ENCODE measurements at regions of chr20 and their contacts with region 1.

Region 1: DNA sequence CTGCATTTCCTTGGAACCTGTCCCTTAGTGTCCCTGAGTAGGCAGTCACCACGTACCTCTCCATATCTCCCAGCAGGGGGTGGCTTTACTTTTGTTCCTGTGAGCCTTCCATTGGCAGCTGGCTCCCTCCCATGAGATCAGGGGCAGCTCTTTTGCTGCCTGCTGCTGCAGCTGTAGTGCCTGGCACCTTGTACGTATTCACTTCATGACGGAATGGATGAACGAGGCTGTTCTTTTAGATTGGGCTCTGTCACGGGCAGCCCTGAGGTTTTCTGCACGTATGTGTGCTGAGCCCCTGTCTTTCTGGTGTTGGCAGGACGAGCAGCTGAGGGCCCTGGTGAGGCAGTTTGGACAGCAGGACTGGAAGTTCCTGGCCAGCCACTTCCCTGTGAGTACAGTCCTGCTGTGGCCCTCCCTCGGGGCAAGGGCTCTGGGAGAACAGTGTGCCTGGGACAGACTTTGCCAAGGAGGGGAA is 14.6 kb downstream of the MYBL2 start:
- DNase-seq: peak; percentile 82
- H3K4me3 ChIP-seq: peak overlapping the region; percentile 59
- H3K27ac ChIP-seq: peak overlapping the region; percentile 97
- H3K4me1 ChIP-seq: peaks cover 76% of the 10 kb centered on the region
- CTCF ChIP-seq: peak; percentile 61

Region 2: DNA sequence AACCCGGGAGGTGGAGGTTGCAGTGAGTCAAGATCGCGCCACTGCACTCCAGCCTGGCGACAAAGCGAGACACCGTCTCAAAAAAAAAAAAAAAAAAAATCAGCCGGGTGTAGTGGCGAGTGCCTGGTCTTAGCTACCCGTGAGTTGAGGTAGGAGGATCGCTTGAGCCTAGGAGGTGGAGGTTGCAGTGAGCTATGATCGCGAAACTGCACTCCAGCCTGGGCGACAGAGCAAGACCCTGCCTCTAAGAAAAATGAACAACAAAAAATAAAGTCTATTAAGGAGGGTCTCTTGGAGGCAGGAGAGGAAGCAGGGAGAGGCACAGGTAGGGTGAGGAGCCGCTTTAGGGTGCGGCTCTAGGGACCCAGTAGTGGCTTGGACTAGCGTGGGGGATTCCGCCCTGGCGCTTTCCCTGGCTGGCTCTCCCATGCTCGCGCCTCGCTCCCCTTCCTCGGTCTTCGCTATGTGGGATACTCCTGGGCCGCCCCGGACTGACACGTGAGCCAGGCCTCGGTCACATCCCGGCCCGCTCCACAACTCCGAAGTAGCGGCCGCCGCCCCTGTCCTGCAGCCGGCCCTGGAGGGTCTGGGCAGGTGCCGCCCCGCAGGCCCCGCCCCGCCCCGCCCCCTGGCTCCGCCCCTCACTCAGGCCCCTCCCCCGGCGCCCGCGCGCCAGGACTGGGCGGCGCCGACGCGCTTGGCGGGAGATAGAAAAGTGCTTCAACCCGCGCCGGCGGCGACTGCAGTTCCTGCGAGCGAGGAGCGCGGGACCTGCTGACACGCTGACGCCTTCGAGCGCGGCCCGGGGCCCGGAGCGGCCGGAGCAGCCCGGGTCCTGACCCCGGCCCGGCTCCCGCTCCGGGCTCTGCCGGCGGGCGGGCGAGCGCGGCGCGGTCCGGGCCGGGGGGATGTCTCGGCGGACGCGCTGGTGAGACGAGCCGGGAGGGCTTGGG is 14.9 kb before region 1 on chr20 and contains the start of gene MYBL2:
- CTCF ChIA-PET with region 1: no interaction called
- POLR2A ChIA-PET with region 1: interaction called, 9 read pairs
- intact Hi-C with region 1: loop called (anchors 1 kb)
- DNase-seq: peak; percentile 92
- H3K4me3 ChIP-seq: peak within 1 kb of the TSS; percentile 96
- H3K27ac ChIP-seq: peak within 1 kb of the TSS; percentile 85
- H3K4me1 ChIP-seq: peaks cover 61% of the 10 kb centered on the region
- CTCF ChIP-seq: no peak
- total RNA-seq, gene MYBL2: 226 and 268 TPM in 2 replicates

Region 3: GRCh38 chr20:43721429-43722152 is 40.1 kb after region 1 on chr20:
- CTCF ChIA-PET with region 1: interaction called, 3 read pairs
- POLR2A ChIA-PET with region 1: interaction called, 5 read pairs
- intact Hi-C with region 1: loop called (anchors 5 kb)
- DNase-seq: peak; percentile 75
- H3K4me3 ChIP-seq: peak overlapping the region; percentile 42
- H3K27ac ChIP-seq: peak overlapping the region; percentile 84
- H3K4me1 ChIP-seq: peaks cover 67% of the 10 kb centered on the region
- CTCF ChIP-seq: no peak

Region 4: DNA sequence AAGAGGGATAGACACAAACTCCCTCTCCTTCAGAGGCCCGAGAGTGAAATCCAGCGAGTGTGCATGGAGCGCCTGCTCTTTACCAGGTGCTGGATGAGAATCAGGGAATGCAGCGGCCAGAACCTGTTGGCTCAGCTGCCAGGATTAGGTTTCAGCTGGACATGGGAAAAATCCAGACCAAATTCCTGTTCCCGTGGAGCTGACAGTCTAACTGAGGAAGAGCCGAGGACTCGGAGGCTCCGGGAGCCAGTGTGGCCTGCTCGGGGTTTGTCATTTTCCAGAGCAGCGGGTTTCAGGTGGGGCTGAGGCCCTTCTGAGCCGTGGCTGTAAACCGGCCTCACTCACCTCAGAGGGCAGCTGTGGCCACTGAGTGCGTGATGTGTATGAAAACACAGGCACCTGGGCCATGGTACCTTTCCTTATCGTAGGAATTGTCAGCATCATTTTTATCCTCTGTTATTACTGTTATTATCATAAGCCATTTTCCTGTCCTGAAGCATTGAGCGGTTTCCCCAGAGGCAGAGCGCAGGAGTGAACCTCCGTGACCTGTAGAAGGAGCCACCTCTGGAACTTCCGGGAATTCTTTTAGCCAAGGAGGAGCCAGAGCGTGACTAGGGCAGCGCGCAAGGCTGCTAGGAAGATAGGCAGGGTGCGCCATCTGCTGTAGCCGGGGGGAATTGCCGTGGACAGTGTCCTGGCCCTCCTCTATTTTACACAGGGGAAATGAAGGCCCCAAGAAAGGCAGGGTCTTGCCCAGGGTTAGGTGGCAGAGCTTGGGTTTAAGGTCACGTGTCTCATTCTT is 928.2 kb after region 1 on chr20:
- CTCF ChIA-PET with region 1: no interaction called
- POLR2A ChIA-PET with region 1: no interaction called
- intact Hi-C with region 1: no loop called
- DNase-seq: peak; percentile 88
- H3K4me3 ChIP-seq: peak overlapping the region; percentile 19
- H3K27ac ChIP-seq: peak overlapping the region; percentile 86
- H3K4me1 ChIP-seq: peaks cover 45% of the 10 kb centered on the region
- CTCF ChIP-seq: peak; percentile 97

Measured in OCI-LY7 (cell line).